ENCODE measurements at regions of chr6 and their contacts with region 1.

Region 1: DNA sequence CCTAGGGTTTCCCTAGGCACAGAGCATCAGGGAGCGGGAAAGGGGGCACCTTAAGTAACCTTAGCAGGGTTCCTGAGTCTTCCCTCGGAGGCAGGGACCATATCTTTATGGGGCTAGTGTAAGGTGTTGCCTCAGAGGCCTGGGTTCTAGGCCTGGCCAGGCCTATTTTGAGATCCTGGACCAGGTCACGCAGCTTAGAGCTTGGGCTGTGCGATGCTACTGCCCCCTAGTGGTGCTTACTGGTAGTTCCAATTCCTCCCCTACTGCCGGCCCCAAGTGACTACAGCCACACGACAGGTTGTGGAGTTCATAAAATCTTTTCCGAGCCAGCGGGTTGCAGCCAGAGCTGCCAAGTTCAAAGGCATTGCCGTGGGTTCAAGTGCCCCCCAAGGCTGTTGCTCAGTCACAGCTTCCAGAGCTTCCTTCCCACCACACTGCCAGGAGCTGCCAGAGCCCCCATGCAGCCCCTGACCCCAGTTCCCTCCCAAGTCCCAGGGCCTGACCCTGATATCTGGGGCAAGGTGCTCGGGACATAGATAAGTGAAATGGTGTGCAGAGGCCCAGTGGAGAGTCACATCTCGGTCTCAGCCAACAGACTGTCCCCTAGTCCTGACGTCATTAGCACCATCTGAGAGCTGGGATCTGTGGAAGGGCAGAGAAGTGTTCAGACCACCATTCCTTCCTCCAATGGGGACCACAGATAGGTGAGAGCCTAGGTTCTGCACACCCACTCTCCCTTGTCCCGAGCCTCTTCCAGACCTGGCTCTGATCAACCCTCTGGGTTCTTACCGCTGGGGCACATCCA is 3.3 kb downstream of the LRRC73 start:
- DNase-seq: peak in 4 of 5 donors; percentile 74 to 82 (median 78)
- ATAC-seq: peak; percentile 36 to 71 (median 40)
- H3K4me3 ChIP-seq: no peak overlapping the region
- H3K27ac ChIP-seq: peak overlapping the region in 2 of 12 donors; percentile 0 to 47
- H3K4me1 ChIP-seq: peaks cover 8 to 63% (median 37%) of the 10 kb centered on the region in 12 donors
- H3K27me3 ChIP-seq: peaks cover 0 to 16% (median 0%) of the 10 kb centered on the region in 9 donors
- CTCF ChIP-seq: peak; percentile 89 to 100 (median 97)
- POLR2A ChIP-seq: peak in 1 of 2 donors; percentile 4

Region 2: DNA sequence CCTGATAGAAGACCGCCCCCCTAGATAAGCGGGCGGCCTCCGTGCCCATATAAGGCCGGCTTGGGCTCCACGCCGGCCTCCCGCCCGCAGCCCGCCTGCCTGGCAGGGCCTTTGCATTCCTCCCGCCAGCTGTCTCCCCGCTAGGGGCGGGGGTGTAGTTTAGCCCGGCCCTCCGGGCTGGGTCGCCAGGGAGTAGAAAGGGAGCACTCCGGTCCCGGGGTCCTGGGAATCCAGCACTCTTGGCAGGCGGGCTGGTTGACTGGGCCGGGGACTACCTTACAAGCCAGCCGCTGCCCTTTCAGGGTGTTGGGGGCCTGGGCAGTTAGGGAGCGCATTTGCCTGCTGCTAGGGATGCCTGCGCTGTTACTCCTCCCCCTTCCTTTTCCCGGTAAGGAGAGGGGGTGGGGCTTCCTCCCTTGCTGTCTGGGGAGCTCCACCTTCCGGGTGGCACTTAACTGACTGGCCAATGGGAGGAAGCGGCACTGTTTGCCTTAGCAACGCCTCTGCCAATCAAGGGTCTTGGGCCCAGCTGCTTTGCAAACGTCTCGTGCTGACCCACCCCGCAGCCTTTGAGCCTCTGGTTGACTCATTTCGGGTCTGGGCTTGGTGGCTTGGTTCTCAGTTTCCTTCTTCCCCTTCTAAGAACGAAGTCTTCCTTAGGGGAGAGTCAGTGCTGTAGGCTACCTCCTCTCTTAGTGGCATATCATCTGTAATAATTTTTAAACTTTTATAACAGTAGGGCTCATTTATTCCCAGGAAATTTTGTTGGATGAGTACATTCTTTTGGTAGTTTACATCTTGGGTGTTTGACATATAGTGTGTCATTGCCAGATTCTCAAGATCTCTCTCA is 332.4 kb before region 1 on chr6:
- intact Hi-C with region 1: no loop called
- DNase-seq: peak; percentile 96 to 99 (median 98)
- ATAC-seq: peak; percentile 79 to 87 (median 82)
- H3K4me3 ChIP-seq: peak overlapping the region in 11 of 12 donors; percentile 25 to 100 (median 95)
- H3K27ac ChIP-seq: peak overlapping the region; percentile 87 to 100 (median 98)
- H3K4me1 ChIP-seq: peaks cover 8 to 44% (median 38%) of the 10 kb centered on the region in 12 donors
- H3K27me3 ChIP-seq: no peaks in the 10 kb centered on the region
- CTCF ChIP-seq: peak in 8 of 12 donors; percentile 19 to 43 (median 30)
- POLR2A ChIP-seq: peak in 1 of 2 donors; percentile 71

Region 3: DNA sequence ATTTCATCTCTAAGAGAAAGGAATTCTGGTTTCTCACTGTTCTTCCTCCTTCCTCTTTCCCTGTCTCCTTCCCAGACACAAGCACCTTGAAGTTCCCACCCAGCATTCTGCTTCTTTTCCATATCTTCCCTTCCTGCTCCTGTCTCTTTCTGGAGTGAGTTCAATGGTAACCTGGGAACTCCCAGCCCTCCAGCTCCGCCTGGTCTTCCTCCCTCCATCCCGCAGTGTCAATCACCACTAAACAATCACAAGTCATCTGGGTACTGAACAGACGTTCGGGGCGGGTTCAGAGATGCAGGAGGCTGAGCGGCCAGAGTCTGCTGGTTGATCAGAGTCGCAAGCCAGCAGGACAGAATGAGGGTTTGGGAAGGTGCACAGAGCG is 255.9 kb before region 1 on chr6:
- intact Hi-C with region 1: loop called in 1 of 10 experiments (anchors 10 kb)
- DNase-seq: no peak
- ATAC-seq: no peak
- H3K4me3 ChIP-seq: no peak overlapping the region
- H3K27ac ChIP-seq: no peak overlapping the region
- H3K4me1 ChIP-seq: peaks cover 0 to 17% (median 9%) of the 10 kb centered on the region in 12 donors
- H3K27me3 ChIP-seq: peaks cover 0 to 28% (median 10%) of the 10 kb centered on the region in 9 donors
- CTCF ChIP-seq: no peak
- POLR2A ChIP-seq: no peak

Region 4: GRCh38 chr6:43263314-43264178 is 243.3 kb before region 1 on chr6:
- intact Hi-C with region 1: loop called in 8 of 10 experiments (anchors 5 to 10 kb)
- DNase-seq: peak; percentile 74 to 88 (median 80)
- ATAC-seq: peak; percentile 67 to 84 (median 80)
- H3K4me3 ChIP-seq: no peak overlapping the region
- H3K27ac ChIP-seq: no peak overlapping the region
- H3K4me1 ChIP-seq: peaks cover 0 to 25% (median 10%) of the 10 kb centered on the region in 12 donors
- H3K27me3 ChIP-seq: peaks cover 0 to 6% (median 0%) of the 10 kb centered on the region in 9 donors
- CTCF ChIP-seq: peak; percentile 58 to 77 (median 68)
- POLR2A ChIP-seq: no peak

Region 5: DNA sequence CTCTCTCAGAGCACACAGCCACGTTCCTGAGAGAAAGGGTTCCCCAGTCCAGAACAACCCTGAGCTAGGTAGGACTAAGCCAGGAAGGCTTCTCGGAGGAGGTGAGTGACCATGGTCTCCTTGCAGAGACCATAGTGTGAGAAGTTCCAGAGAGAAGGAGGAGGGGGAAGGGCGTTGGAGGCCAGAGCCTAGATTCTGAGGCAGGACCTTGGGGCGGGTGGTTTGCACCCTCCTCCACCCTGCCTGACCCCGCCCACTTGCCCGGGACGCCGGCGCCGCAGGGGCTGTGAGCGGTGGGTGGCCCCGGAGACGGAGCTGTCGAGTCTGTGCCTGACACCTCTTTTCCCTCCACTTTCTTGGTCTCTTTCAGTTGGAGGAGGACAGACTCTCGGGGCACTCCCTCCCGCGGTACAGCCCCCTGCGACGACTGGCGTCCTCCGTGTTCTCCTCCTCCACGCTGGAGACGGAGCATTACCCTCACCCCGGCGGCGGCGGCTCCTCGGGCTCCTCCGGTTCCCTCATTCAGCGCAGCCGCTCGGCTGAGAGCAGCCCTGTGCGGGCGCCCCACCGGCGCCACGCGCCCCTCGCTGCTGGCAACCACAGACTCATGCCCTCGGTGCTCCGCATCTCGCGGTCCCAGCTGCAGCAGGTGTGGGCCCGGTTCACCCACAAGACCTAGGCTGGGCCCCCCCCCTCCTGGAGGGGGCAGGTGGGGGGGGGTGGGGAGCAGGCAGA is 237.4 kb before region 1 on chr6:
- intact Hi-C with region 1: loop called in 7 of 10 experiments (anchors 5 to 10 kb)
- DNase-seq: peak in 3 of 5 donors; percentile 50 to 74 (median 60)
- ATAC-seq: peak in 3 of 4 donors; percentile 20 to 52 (median 26)
- H3K4me3 ChIP-seq: peak overlapping the region in 10 of 12 donors; percentile 24 to 51 (median 34)
- H3K27ac ChIP-seq: peak overlapping the region in 11 of 12 donors; percentile 61 to 90 (median 74)
- H3K4me1 ChIP-seq: peaks cover 0 to 35% (median 24%) of the 10 kb centered on the region in 12 donors
- H3K27me3 ChIP-seq: peaks cover 0 to 25% (median 4%) of the 10 kb centered on the region in 9 donors
- CTCF ChIP-seq: no peak
- POLR2A ChIP-seq: no peak

Region 6: GRCh38 chr6:43369174-43370022 is 137.5 kb before region 1 on chr6 and contains the start of gene ZNF318:
- intact Hi-C with region 1: loop called in 4 of 10 experiments (anchors 5 to 10 kb)
- DNase-seq: peak; percentile 97 to 98 (median 97)
- ATAC-seq: peak; percentile 98 to 99 (median 99)
- H3K4me3 ChIP-seq: peak within 1 kb of the TSS; percentile 68 to 99 (median 84)
- H3K27ac ChIP-seq: peak within 1 kb of the TSS; percentile 19 to 94 (median 88)
- H3K4me1 ChIP-seq: peaks cover 0 to 29% (median 19%) of the 10 kb centered on the region in 12 donors
- H3K27me3 ChIP-seq: no peaks in the 10 kb centered on the region
- CTCF ChIP-seq: peak in 1 of 12 donors; percentile 5
- POLR2A ChIP-seq: peak in 1 of 2 donors; percentile 55
- total RNA-seq, gene ZNF318: 10.5 to 15.7 (median 14.3) TPM

Region 7: GRCh38 chr6:43386492-43386891 is 120.4 kb before region 1 on chr6:
- intact Hi-C with region 1: loop called in 6 of 10 experiments (anchors 1 to 5 kb)
- DNase-seq: no peak
- ATAC-seq: peak in 1 of 4 donors; percentile 28
- H3K4me3 ChIP-seq: no peak overlapping the region
- H3K27ac ChIP-seq: no peak overlapping the region
- H3K4me1 ChIP-seq: peaks cover 0 to 27% (median 0%) of the 10 kb centered on the region in 12 donors
- H3K27me3 ChIP-seq: peaks cover 0 to 30% (median 2%) of the 10 kb centered on the region in 9 donors
- CTCF ChIP-seq: peak in 8 of 12 donors; percentile 18 to 66 (median 50)
- POLR2A ChIP-seq: no peak

Region 8: GRCh38 chr6:43454696-43455530 is 52.0 kb before region 1 on chr6:
- intact Hi-C with region 1: loop called in 9 of 10 experiments (anchors 1 to 2 kb)
- DNase-seq: peak; percentile 84 to 93 (median 89)
- ATAC-seq: peak; percentile 67 to 91 (median 90)
- H3K4me3 ChIP-seq: peak overlapping the region; percentile 19 to 64 (median 54)
- H3K27ac ChIP-seq: peak overlapping the region in 2 of 12 donors; percentile 24 to 34
- H3K4me1 ChIP-seq: peaks cover 0 to 23% (median 5%) of the 10 kb centered on the region in 12 donors
- H3K27me3 ChIP-seq: peaks cover 0 to 26% (median 6%) of the 10 kb centered on the region in 9 donors
- CTCF ChIP-seq: peak in 4 of 12 donors; percentile 2 to 7 (median 4)
- POLR2A ChIP-seq: no peak